Right ventricle myocardium inferior (tissue), 1 donor: ENCODE measurements at regions of chr2 and their contacts with region 1.

Region 1: GRCh38 chr2:70919672-70920366 is 15.9 kb upstream of the ATP6V1B1 start:
- DNase-seq: peak; percentile 85
- ATAC-seq: peak; percentile 83

Region 2: GRCh38 chr2:70861777-70862625 is 57.8 kb before region 1 on chr2:
- intact Hi-C with region 1: loop called (anchors 2 kb)
- DNase-seq: peak; percentile 85
- ATAC-seq: peak; percentile 80

Region 3: GRCh38 chr2:70871398-70872211 is 48.2 kb before region 1 on chr2:
- intact Hi-C with region 1: loop called (anchors 2 kb)
- DNase-seq: peak; percentile 91
- ATAC-seq: peak; percentile 94